Ovary (tissue), 10 donors: ENCODE measurements at regions of chr7 and their contacts with region 1.

Region 1: DNA sequence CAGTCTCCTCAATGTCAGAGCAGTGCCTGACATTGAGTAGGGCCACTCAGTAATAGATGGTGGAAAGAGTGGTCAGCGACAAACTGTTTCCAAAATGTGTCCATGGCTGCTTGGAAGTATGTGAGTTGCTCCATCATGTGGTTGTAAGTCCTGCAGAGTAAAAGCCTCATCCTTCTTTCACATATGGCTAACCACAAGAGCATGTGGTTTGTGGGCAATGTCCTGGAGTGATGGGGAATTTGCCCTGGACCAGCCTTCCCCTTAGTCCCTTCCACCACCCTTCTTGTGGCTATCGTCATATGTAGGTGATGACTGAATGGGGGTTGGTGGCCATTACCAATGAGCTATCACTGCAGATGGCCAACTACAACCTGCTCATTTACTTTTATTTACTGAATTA is 33.0 kb upstream of the PLXNA4 start:
- DNase-seq: no peak
- H3K4me3 ChIP-seq: no peak overlapping the region
- H3K27ac ChIP-seq: no peak overlapping the region
- H3K4me1 ChIP-seq: no peaks in the 10 kb centered on the region
- H3K27me3 ChIP-seq: no peaks in the 10 kb centered on the region
- CTCF ChIP-seq: no peak
- EP300 ChIP-seq: no peak
- POLR2A ChIP-seq: no peak

Region 2: DNA sequence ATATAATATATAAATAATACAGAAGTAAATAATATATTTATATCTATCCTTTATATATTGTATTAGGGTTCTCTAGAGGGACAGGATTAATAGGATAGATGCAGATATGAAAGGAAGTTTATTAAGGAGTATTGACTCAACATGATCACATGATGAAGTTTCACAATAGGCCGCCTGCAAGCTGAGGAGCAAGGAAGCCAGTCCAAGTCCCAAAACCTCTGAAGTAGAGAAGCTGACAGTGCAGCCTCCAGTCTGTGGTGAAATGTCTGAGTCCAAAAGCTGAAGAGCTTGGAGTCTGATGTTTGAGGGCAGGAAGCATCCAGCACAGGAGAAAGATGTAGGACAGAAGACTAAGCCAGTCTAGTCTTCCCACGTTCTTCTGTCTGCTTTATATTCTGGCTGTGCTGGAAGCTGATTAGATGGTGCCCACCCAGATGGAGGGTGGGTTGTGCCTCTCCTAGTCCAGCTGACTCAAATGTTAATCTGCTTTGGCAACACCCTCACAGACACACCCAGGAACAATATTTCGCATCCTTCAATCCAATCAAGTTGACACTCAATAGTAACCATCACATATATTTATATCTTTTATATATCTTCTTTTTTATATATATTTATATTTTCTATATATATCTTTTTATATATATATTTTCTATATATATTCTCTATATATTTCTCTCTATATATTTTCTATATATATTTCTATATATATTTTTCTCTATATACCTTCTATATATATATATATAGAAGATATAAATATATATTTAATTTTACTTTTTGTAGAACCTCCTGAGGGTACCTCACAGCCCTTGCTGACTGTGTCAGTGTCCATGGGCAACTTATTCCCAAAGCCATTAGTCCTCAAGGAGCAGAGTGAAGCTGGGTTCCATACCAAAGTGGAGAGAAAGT is 1893.5 kb after region 1 on chr7:
- intact Hi-C with region 1: loop called in 1 of 4 experiments (anchors 5 kb)
- DNase-seq: peak in 1 of 5 donors; percentile 31
- H3K4me3 ChIP-seq: no peak overlapping the region
- H3K27ac ChIP-seq: no peak overlapping the region
- H3K4me1 ChIP-seq: no peaks in the 10 kb centered on the region
- H3K27me3 ChIP-seq: no peaks in the 10 kb centered on the region
- CTCF ChIP-seq: no peak
- EP300 ChIP-seq: no peak
- POLR2A ChIP-seq: no peak